Activated naive CD4-positive, alpha-beta T cell treated with anti-CD3 and anti-CD28 coated beads for 36 hours (primary cell): ENCODE measurements at regions of chr2 and their contacts with region 1.

Region 1: DNA sequence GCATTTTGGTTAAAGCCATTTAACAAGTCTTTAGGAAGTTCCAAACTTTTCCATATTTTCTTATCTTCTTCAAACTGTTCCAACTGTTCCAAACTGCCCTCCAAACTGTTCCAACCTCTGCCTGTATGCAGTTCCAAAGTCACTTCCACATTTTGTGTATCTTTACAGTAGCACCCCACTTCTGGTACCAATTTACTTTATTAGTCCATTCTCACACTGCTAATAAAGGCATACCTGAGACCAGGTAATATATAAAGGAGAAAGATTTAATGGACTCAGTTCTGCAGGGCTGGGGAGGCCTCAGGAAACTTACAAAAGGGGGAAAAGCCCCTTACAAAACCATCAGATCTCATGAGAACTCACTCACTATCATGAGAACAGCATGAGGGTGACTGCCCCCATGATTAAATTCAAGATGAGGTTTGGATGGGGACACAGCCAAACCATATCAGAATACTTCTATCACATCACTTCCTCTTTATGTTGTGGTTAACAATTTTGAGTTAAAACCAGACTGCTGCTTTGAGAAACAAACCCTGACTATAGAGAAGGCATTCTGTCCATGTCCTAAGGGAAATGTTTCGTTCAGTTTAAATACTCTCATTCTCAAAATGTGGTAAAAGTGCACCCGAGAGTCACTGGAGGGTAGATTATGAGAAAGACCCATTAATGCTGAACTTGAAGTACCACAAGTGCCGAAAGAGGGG is 11.0 kb downstream of the IL18R1 start:
- DNase-seq: peak; percentile 52
- H3K4me3 Mint-ChIP-seq: peak overlapping the region; percentile 20
- H3K27ac Mint-ChIP-seq: peak overlapping the region; percentile 94
- H3K4me1 Mint-ChIP-seq: peaks cover 80% of the 10 kb centered on the region
- H3K27me3 Mint-ChIP-seq: no peaks in the 10 kb centered on the region

Region 2: DNA sequence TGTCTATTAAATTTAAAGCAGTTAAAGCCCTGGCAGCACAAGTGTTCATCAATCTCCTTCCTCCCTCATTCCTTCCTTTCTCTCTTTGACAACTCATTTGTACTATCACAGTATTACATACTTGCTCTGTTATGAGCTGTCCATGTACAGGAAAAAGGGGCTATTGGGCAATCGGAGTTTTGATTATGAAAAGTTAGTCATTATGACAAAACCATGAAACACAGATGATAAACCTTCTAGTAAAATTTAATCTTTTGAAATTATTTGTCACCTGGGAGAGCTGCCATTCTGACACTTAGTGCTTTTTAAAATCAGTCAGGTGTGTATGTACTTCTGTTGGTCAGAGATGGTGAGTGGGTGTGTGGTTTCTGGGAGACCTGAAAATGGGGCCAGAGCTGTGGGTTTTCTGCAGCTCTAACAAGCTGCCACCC is 629.7 kb before region 1 on chr2:
- CTCF ChIA-PET with region 1: no interaction called
- intact Hi-C with region 1: loop called (anchors 10 kb)
- DNase-seq: peak; percentile 77
- H3K4me3 Mint-ChIP-seq: peak overlapping the region; percentile 8
- H3K27ac Mint-ChIP-seq: peak overlapping the region; percentile 89
- H3K4me1 Mint-ChIP-seq: peaks cover 90% of the 10 kb centered on the region
- H3K27me3 Mint-ChIP-seq: no peaks in the 10 kb centered on the region

Region 3: DNA sequence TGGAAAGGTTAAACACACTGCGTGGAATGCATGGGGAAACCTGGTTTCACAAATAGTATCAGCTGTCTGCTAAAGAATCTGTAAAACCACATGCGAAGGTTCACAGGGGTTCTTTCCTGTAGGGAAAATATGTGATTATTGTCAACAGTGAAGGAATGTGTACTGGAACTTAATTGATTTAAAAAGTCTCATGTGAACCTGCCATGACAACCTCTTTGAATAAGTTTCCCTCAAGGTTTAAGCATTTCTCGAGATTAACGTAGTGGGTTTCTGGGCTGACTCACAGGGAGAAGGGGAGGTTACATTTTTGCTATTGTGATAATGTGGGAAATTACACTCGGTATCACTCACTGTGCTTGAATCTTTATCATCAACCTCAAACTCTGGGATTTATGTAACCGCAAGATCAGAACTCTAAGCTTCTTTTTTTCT is 252.3 kb before region 1 on chr2:
- CTCF ChIA-PET with region 1: no interaction called
- intact Hi-C with region 1: loop called (anchors 1 kb)
- DNase-seq: peak; percentile 57
- H3K4me3 Mint-ChIP-seq: no peak overlapping the region
- H3K27ac Mint-ChIP-seq: peak overlapping the region; percentile 54
- H3K4me1 Mint-ChIP-seq: peaks cover 62% of the 10 kb centered on the region
- H3K27me3 Mint-ChIP-seq: no peaks in the 10 kb centered on the region

Region 4: DNA sequence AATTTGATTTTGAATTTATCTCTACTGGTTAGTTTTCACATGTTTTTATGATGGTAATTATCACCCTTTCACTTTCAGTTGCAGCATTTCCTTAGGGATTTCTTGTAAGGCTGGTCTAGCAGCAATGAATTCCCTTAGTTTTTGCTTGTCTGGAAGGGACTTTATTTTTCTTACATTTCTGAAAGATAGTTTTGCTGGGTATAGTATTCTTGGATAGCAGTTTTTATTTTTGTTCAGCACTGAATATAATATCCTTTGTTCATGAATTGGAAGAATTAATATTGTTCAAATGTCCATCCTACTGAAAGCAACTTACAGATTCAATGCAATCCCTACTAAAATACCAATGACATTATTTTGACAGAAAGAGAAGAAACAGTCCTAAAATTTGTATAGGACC is 149.5 kb before region 1 on chr2:
- CTCF ChIA-PET with region 1: no interaction called
- intact Hi-C with region 1: no loop called
- DNase-seq: no peak
- H3K4me3 Mint-ChIP-seq: no peak overlapping the region
- H3K27ac Mint-ChIP-seq: no peak overlapping the region
- H3K4me1 Mint-ChIP-seq: peaks cover 6% of the 10 kb centered on the region
- H3K27me3 Mint-ChIP-seq: no peaks in the 10 kb centered on the region

Region 5: DNA sequence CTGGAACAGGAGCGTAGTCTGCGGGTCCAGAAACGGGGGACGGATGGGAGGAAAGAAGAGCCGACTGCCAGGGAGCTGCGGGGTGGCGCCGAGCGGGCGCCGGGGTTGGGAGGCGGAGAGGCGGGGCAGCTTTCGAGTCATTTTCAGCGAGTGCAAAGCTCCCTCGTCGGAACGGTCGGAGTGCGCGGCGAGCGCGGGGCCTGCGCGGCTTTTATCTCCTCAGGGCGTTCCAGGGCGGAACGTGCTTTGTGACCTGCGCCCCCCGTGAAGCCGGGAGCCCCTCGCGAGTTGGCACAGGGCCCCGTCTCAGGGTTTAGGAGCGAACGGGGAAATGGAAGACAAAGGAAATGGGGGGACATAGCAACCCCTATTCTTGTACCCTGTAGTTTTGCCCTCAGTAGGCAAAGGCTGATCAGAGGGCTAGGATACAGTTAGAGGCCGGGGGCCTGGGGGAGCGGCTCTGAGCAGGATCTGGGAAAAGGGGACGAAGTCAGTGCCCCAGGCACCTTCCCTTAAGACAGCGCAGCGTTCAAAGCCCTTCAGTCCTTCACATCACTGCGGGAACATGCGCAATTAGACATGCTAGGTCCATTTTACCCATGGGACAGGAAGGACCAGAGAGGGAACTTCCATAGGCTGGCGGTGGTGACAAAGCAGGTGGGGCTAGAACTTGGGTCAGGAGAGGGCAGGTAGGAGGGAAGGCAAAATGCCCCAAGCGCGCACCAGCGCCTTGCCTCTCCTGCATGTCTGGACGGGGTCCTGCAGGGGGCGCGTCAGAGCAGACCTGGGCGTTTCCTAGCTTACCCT is 115.3 kb before region 1 on chr2:
- CTCF ChIA-PET with region 1: interaction called, 8 read pairs
- intact Hi-C with region 1: loop called (anchors 1 kb)
- DNase-seq: peak; percentile 82
- H3K4me3 Mint-ChIP-seq: peak overlapping the region; percentile 77
- H3K27ac Mint-ChIP-seq: peak overlapping the region; percentile 69
- H3K4me1 Mint-ChIP-seq: peaks cover 37% of the 10 kb centered on the region
- H3K27me3 Mint-ChIP-seq: peaks cover 3% of the 10 kb centered on the region

Region 6: GRCh38 chr2:102391565-102391964 is 25.0 kb after region 1 on chr2:
- CTCF ChIA-PET with region 1: no interaction called
- intact Hi-C with region 1: loop called (anchors 1 kb)
- DNase-seq: no peak
- H3K4me3 Mint-ChIP-seq: no peak overlapping the region
- H3K27ac Mint-ChIP-seq: no peak overlapping the region
- H3K4me1 Mint-ChIP-seq: peaks cover 17% of the 10 kb centered on the region
- H3K27me3 Mint-ChIP-seq: no peaks in the 10 kb centered on the region

Region 7: GRCh38 chr2:102442967-102443828 is 76.6 kb after region 1 on chr2:
- CTCF ChIA-PET with region 1: interaction called, 18 read pairs
- intact Hi-C with region 1: no loop called
- DNase-seq: peak; percentile 74
- H3K4me3 Mint-ChIP-seq: no peak overlapping the region
- H3K27ac Mint-ChIP-seq: peak overlapping the region; percentile 34
- H3K4me1 Mint-ChIP-seq: peaks cover 10% of the 10 kb centered on the region
- H3K27me3 Mint-ChIP-seq: no peaks in the 10 kb centered on the region